Esophagus muscularis mucosa (tissue), 4 donors: ENCODE measurements at regions of chr9 and their contacts with region 1.

Region 1: DNA sequence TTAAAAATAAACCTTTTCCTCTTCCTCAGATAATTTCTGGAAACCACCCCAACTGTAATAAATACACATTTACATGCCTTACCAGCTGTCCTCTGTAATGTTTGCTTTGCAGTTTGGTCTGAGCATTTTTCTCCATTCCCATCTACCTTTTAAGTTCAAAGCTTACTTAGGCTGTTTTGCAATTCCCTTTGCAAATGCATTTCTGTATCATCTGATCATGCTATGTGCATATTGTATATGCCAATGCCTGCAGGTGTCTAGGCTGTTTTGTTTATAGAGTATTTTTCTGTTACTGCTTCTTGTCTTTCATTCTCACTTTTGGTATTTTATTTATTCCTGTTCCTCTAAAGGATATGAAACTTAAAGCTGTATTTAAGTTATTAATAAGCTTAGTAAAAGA is 86.3 kb downstream of the SLC44A1 start:
- DNase-seq: no peak
- H3K4me3 ChIP-seq: no peak overlapping the region
- H3K27ac ChIP-seq: no peak overlapping the region
- H3K4me1 ChIP-seq: peaks cover 9 to 20% (median 15%) of the 10 kb centered on the region in 4 donors
- H3K27me3 ChIP-seq: no peaks in the 10 kb centered on the region
- CTCF ChIP-seq: no peak
- EP300 ChIP-seq: no peak
- POLR2A ChIP-seq: no peak

Region 2: GRCh38 chr9:105289307-105289706 is 41.4 kb before region 1 on chr9:
- intact Hi-C with region 1: no loop called
- DNase-seq: no peak
- H3K4me3 ChIP-seq: no peak overlapping the region
- H3K27ac ChIP-seq: no peak overlapping the region
- H3K4me1 ChIP-seq: peaks cover 12 to 27% (median 20%) of the 10 kb centered on the region in 4 donors
- H3K27me3 ChIP-seq: no peaks in the 10 kb centered on the region
- CTCF ChIP-seq: no peak
- EP300 ChIP-seq: no peak
- POLR2A ChIP-seq: no peak

Region 3: DNA sequence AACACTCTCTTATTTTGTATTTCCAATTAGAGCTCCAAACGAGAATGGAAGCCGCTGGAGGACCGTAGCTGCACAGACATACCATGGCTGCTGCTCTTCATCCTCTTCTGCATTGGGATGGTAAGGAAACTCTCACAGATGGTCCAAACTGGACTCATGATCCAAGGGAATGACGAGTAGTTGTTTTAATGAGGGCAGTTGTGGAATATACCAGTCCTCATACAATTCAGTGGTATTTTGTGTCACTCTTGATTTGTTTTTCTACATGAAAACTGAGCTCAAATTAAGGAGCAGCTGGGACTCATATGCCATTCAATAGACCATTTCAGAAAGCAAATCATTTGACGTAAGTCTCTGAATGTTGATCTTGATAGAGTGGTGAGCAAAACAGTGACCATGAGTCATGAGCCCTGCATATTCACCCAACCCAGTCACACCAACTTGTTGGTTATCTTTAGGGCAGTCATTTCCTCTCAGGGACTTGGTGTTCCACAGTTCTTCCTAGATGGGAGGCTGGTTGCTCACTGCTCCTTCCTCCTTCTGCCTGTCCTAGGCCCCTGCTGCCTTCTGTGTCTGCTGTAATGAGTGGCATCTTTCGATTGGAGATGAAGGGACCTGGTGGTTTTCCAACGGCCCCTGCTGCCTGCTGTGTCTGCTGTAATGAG is 31.4 kb before region 1 on chr9:
- intact Hi-C with region 1: loop called (anchors 2 kb)
- DNase-seq: no peak
- H3K4me3 ChIP-seq: no peak overlapping the region
- H3K27ac ChIP-seq: no peak overlapping the region
- H3K4me1 ChIP-seq: peaks cover 13 to 17% (median 13%) of the 10 kb centered on the region in 4 donors
- H3K27me3 ChIP-seq: no peaks in the 10 kb centered on the region
- CTCF ChIP-seq: no peak
- EP300 ChIP-seq: no peak
- POLR2A ChIP-seq: no peak

Region 4: DNA sequence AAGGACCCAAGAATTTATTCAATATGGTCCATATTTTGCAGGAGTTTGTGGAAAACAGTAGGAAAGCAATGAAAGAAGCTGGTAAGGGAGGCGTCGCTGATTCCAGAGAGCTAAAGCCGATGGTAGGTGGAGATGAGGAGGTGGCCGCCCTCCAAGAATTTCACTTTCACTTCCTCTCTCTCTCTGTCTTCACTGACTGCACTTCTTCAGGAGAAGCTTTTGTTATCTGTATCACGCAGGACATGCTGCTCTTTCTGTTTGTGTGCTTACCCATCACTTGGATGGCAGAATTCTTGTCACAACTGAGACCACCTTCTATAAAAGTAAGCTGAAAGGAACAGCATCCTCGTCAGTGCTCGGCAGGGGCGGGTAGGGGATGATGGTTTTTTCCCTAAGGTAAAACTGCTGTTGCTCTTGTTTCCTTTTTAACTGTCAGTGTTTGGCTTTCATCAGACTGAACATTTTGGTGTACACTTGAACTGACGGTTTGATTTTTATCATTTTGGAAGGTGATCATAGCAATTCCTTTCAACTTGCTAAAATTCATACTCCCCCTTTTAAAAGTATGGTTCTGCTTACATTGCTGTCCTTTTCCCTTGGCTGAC is 54.7 kb after region 1 on chr9:
- intact Hi-C with region 1: no loop called
- DNase-seq: no peak
- H3K4me3 ChIP-seq: peak overlapping the region; percentile 9 to 45 (median 32)
- H3K27ac ChIP-seq: peak overlapping the region in 1 of 4 donors; percentile 18
- H3K4me1 ChIP-seq: peaks cover 0 to 5% (median 0%) of the 10 kb centered on the region in 4 donors
- H3K27me3 ChIP-seq: no peaks in the 10 kb centered on the region
- CTCF ChIP-seq: no peak
- EP300 ChIP-seq: no peak
- POLR2A ChIP-seq: no peak